Esophagus squamous epithelium (tissue), 5 donors: ENCODE measurements at regions of chr17 and their contacts with region 1.

Region 1: DNA sequence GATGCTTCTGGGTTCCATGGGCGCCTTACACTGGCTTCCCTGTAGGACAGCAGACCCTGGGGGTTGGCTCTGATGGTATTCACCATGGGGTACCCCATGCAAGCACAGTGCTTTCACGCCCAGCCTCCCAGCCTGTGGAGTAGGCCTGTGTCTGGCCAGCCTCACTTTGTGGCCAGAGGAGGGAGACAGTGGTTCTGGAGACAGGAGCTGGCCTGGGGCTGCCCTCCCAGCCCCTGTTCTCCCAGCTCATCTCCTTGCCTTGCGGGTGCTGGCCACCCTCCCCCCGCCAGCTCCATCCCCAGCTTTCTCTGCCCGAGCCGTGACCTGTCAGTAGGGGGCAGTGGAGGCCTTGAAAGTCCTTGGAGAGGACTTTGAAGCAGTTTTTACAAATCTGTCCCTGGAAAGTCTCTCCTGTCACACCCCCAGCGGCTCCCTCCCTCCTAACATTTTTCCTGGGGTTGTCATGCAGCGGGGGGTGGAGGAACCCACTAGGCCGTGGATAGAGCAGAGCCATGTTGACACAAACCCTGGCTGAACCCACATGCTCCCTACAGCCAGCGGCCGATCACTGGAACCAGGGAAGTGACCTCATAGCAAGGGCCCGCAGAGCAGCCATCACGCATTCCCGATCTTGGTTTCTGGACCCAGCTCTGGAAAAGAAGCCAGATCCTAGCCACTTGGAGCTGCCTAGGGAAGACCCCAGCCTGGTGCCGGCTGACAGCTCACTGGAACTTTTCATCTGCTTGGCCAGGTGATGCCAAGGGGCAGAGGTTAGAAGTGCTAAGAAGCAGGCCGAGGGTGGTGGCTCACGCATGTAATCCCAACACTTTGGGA is 289.4 kb downstream of the SEC14L1 start:
- DNase-seq: no peak
- H3K4me3 ChIP-seq: no peak overlapping the region
- H3K27ac ChIP-seq: peak overlapping the region; percentile 59 to 94 (median 90)
- H3K4me1 ChIP-seq: peaks cover 75 to 100% (median 82%) of the 10 kb centered on the region in 3 donors
- H3K27me3 ChIP-seq: no peaks in the 10 kb centered on the region
- CTCF ChIP-seq: peak; percentile 71 to 77 (median 73)
- POLR2A ChIP-seq: no peak

Region 2: DNA sequence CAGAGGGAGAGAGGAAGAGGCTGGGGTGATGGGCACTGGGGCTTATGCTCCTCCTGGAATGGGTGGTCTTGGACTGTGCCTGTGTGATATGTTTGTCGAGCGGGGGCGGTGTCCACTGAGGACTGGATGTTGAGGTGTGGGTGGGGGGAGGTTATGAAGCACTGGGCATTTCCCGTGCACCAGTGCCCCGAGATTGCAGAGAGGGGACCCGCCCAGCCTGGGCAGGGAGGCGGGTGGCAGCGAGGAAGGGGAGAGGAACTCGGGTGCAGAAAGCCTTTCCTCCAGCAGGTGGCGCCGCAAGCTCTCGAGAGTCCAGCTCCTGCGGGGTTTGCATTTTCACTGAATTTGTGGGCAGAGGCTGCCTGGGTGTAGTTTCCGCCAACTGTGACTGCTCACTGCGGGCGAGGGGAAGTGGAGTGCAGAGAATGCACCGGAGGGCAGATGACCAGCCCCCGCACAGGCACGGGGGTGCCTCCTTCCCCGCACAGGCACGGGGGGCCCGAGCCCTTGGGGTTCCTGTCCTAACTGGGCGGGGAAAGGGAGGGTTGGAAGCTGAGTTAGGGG is 98.8 kb before region 1 on chr17:
- intact Hi-C with region 1: loop called (anchors 5 kb)
- DNase-seq: peak; percentile 64
- H3K4me3 ChIP-seq: peak overlapping the region in 3 of 4 donors; percentile 21 to 38 (median 29)
- H3K27ac ChIP-seq: peak overlapping the region; percentile 22 to 83 (median 64)
- H3K4me1 ChIP-seq: peaks cover 11 to 71% (median 35%) of the 10 kb centered on the region in 3 donors
- H3K27me3 ChIP-seq: no peaks in the 10 kb centered on the region
- CTCF ChIP-seq: peak; percentile 94 to 99 (median 97)
- POLR2A ChIP-seq: no peak

Region 3: DNA sequence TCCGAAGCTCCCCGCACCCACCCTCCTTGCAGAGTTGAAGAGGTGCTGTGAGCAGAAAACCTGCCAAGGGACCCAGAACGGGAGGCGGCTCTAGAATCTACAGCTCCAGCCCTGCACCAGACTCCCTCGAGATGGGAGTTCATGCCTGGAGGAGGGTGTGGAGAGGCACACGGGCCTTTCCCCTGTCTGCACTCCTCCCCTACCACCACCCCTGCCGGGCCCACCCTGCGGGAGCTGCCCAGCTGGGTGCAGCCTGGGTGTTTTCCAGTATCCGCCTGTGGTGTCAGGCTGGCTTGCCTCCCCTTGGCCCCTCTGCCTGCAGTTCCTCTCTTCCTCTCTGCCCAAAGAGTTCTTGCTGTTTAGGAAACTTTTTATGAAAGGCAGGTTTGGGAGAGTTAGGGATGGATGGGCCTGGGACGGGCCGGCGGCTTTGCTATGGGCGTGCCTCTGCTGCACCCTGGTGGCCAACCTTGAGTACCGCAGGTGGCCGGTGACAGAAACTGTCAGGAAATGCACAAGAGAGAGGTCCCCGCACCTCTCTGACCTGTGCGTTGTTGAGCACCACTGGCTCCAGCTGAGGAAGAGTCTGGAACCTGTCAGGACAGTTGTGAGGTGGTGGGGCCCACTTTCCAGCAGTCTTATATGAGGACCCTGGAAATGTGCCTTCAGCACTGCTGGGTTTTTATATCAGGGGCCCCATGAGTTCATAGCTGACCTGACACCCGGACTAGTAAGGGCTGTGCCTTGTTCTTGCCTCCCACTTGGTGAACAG is 64.7 kb after region 1 on chr17:
- intact Hi-C with region 1: loop called (anchors 5 kb)
- DNase-seq: no peak
- H3K4me3 ChIP-seq: no peak overlapping the region
- H3K27ac ChIP-seq: peak overlapping the region in 3 of 4 donors; percentile 22 to 56 (median 54)
- H3K4me1 ChIP-seq: peaks cover 10 to 47% (median 12%) of the 10 kb centered on the region in 3 donors
- H3K27me3 ChIP-seq: no peaks in the 10 kb centered on the region
- CTCF ChIP-seq: peak; percentile 97 to 100 (median 99)
- POLR2A ChIP-seq: no peak

Region 4: GRCh38 chr17:77528516-77529327 is 98.6 kb after region 1 on chr17:
- intact Hi-C with region 1: no loop called
- DNase-seq: no peak
- H3K4me3 ChIP-seq: peak overlapping the region; percentile 22 to 59 (median 37)
- H3K27ac ChIP-seq: no peak overlapping the region
- H3K4me1 ChIP-seq: peaks cover 8 to 30% (median 10%) of the 10 kb centered on the region in 3 donors
- H3K27me3 ChIP-seq: peaks cover 0 to 50% (median 0%) of the 10 kb centered on the region in 4 donors
- CTCF ChIP-seq: no peak
- POLR2A ChIP-seq: no peak

Region 5: GRCh38 chr17:77555741-77556291 is 125.7 kb after region 1 on chr17:
- intact Hi-C with region 1: no loop called
- DNase-seq: no peak
- H3K4me3 ChIP-seq: no peak overlapping the region
- H3K27ac ChIP-seq: no peak overlapping the region
- H3K4me1 ChIP-seq: peaks cover 0 to 19% (median 0%) of the 10 kb centered on the region in 3 donors
- H3K27me3 ChIP-seq: peaks cover 0 to 70% (median 0%) of the 10 kb centered on the region in 4 donors
- CTCF ChIP-seq: no peak
- POLR2A ChIP-seq: no peak